ENCODE measurements at regions of chr2 and their contacts with region 1.

Region 1: GRCh38 chr2:233061591-233062450 is 1.7 kb downstream of the INPP5D start:
- DNase-seq: peak; percentile 79
- H3K4me3 Mint-ChIP-seq: peak overlapping the region; percentile 95
- H3K27ac Mint-ChIP-seq: peak overlapping the region; percentile 98
- H3K4me1 Mint-ChIP-seq: peaks cover 50% of the 10 kb centered on the region
- H3K27me3 Mint-ChIP-seq: no peaks in the 10 kb centered on the region

Region 2: DNA sequence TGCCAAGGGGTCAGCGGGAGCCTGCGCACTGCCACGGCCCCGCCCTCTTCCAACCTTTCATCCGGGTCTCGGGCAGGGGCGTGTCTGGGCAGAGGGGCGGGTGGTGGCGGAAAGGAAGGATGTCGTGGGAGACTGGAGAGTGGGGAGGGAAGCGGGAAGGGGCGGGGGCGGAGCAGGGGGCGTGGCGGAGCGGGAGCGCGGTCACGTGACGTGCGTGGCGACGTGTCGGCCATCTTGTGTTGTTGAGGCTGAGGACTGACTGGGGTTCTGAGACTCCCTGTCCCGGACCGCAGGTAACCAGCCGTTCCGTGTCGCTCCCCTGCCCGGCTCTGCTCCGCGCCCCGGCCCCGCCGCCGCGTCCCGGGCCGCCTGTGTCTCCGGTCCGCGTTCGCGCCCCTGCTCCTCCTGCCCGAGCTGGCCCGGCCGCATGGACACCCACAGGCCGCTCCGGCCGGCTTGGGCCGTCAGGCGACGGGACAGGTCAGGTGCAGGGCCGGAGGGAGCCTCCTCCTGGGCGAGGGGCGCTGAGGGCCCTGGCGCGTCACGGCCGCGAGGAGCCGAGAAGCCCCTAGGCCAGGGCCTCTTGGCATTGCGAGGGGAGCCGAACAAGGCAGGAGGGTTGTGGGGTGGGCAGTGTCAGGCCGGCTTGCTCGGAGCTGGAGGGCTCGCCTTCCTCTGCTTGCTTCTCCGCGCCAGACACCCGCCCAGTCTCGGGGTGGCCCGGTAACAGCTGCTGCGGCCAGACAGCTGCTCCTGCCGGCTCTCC is 364.5 kb before region 1 on chr2 and contains the start of gene GIGYF2:
- intact Hi-C with region 1: loop called (anchors 10 kb)
- DNase-seq: peak; percentile 97
- H3K4me3 Mint-ChIP-seq: peak within 1 kb of the TSS; percentile 99
- H3K27ac Mint-ChIP-seq: peak within 1 kb of the TSS; percentile 92
- H3K4me1 Mint-ChIP-seq: peaks cover 28% of the 10 kb centered on the region
- H3K27me3 Mint-ChIP-seq: peaks cover 6% of the 10 kb centered on the region
- total RNA-seq, gene GIGYF2: 71.9 and 72.0 TPM in 2 replicates

Region 3: DNA sequence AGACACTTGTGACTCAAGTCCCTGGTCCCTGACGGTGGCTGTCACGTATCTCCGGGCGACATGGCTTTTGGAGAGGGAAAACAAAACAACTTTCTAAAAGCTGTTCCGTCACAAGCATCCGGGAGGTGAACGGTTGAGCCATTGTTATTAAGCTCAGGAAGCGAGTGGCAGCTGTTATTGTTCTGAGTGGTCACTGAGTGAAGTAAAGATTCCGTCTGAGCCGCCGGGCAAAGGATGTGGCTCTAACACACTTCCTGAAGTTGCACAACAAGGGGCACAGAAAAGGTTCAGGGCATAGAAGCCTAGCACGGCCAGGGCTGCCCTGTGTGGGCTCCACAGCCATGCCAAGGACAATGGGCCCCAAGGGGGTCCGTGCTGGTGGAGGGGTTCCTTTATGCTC is 22.7 kb after region 1 on chr2:
- intact Hi-C with region 1: loop called (anchors 1 kb)
- DNase-seq: peak; percentile 83
- H3K4me3 Mint-ChIP-seq: peak overlapping the region; percentile 64
- H3K27ac Mint-ChIP-seq: peak overlapping the region; percentile 82
- H3K4me1 Mint-ChIP-seq: peaks cover 69% of the 10 kb centered on the region
- H3K27me3 Mint-ChIP-seq: no peaks in the 10 kb centered on the region

Region 4: DNA sequence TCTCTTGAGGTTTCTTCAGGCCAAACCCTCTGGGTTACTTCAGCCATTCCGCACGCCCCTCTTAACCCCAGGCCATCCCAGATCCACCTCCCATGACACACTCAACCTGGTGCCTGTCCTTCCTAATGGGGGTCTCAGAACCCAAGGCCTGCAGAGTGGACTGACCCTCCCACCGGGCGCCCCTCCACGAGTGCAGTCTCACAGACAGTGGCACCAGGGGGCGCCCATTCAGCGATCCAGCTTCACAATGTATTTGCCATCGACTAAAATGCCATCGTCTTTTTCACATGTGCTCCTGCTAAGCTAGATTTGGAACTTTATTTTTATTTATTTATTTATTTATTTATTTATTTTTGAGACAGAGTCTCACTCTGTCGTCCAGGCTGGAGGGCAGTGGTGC is 36.8 kb after region 1 on chr2:
- intact Hi-C with region 1: loop called (anchors 5 kb)
- DNase-seq: no peak
- H3K4me3 Mint-ChIP-seq: no peak overlapping the region
- H3K27ac Mint-ChIP-seq: no peak overlapping the region
- H3K4me1 Mint-ChIP-seq: peaks cover 37% of the 10 kb centered on the region
- H3K27me3 Mint-ChIP-seq: no peaks in the 10 kb centered on the region

Region 5: DNA sequence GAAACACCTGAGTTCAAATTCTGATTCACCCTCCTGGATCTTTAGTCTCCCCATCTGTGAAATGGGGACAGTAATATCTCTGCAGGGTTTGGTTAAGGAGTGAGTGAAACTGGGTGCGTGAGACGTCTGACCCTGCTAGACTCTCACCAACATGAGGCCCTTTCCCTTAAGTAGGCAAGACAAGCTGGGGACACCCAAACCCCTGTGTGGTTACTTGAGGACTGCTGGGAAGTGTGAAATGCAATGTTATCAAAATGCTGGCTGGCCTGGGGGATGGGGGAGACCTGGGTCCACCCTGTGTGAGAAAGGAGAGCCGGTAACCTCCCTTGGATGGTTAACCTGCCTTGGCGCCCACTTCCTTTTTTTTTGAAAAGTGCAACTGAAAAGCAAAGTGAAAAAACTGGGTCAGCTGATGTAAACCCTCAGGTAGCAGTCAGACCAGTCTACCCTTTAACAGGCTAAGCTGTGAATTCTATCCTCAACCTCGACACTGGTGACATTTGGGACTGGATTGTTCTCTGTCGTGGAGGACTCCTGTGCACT is 80.6 kb after region 1 on chr2:
- intact Hi-C with region 1: loop called (anchors 5 kb)
- DNase-seq: peak; percentile 80
- H3K4me3 Mint-ChIP-seq: peak overlapping the region; percentile 47
- H3K27ac Mint-ChIP-seq: peak overlapping the region; percentile 70
- H3K4me1 Mint-ChIP-seq: peaks cover 26% of the 10 kb centered on the region
- H3K27me3 Mint-ChIP-seq: no peaks in the 10 kb centered on the region

Region 6: GRCh38 chr2:233234264-233234663 is 172.4 kb after region 1 on chr2:
- intact Hi-C with region 1: loop called (anchors 2 kb)
- DNase-seq: peak; percentile 76
- H3K4me3 Mint-ChIP-seq: peak overlapping the region; percentile 54
- H3K27ac Mint-ChIP-seq: peak overlapping the region; percentile 89
- H3K4me1 Mint-ChIP-seq: peaks cover 60% of the 10 kb centered on the region
- H3K27me3 Mint-ChIP-seq: no peaks in the 10 kb centered on the region